ENCODE measurements at regions of chr1 and their contacts with region 1.

Region 1: GRCh38 chr1:46179138-46180081 is 3.1 kb upstream of the P3R3URF start:
- DNase-seq: peak; percentile 92
- H3K4me3 ChIP-seq: peak overlapping the region in 1 of 2 experiments; percentile 50; a peak in 1 of 4 replicates
- H3K27ac ChIP-seq: no peak overlapping the region
- H3K4me1 ChIP-seq: peaks cover 23 to 26% of the 10 kb centered on the region in 2 experiments; a peak in 3 of 4 replicates
- H3K27me3 ChIP-seq: no peaks in the 10 kb centered on the region
- CTCF ChIP-seq: peak; percentile 94
- EP300 ChIP-seq: no peak
- RAD21 ChIP-seq: peak; percentile 98

Region 2: DNA sequence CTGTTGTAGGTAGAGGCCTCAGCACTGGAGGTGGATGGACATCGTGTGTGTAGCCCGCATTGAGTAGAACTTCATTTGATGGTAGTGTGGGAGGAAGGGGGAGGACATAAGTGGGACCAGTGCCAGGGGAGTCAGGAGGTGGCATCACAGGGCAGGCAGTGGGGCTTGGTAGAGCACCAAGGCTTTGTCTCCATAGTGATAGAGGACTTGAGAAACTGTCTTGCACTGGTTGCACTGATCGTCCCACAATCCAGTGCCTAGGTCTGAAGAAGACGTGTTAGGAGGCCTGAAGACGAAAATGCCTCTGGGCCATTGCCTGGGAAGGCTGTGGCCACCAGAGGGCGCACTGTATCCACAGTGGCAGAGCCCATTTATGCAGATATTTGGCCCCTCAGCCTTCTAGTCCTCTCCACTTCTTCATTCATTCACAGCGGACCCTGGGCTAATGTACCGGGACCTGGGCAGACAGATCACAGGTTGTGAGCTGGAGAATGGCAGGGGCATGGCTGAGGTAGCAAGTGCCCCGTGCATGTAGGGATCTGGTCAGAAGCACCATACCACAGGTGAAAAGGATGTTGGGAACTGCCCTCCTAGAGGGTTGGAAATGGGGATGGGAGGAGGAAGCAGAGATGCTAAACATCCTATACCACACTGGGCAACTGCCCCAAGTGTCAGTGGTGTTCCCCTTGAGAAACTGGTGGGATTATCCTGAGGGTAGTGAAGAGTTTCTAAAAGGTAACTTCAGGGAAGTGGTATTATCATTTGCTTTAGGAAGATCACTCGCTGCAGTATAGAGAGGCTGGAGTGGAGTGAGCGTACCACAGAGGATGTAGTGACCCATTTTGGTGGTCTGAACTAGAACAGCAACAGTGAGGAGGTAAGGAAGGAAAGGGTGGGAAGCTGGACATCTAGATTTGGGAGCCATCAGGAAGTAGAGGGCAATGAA is 142.2 kb before region 1 on chr1:
- CTCF ChIA-PET with region 1: interaction called, 57 read pairs
- POLR2A ChIA-PET with region 1: no interaction called
- DNase-seq: peak; percentile 82
- H3K4me3 ChIP-seq: peak overlapping the region in 1 of 2 experiments; percentile 40; a peak in 1 of 4 replicates
- H3K27ac ChIP-seq: no peak overlapping the region; a peak in 1 of 4 replicates
- H3K4me1 ChIP-seq: peaks cover 0 to 29% of the 10 kb centered on the region in 2 experiments; a peak in 2 of 4 replicates
- H3K27me3 ChIP-seq: no peaks in the 10 kb centered on the region
- CTCF ChIP-seq: peak; percentile 97
- EP300 ChIP-seq: no peak
- RAD21 ChIP-seq: peak; percentile 90

Region 3: DNA sequence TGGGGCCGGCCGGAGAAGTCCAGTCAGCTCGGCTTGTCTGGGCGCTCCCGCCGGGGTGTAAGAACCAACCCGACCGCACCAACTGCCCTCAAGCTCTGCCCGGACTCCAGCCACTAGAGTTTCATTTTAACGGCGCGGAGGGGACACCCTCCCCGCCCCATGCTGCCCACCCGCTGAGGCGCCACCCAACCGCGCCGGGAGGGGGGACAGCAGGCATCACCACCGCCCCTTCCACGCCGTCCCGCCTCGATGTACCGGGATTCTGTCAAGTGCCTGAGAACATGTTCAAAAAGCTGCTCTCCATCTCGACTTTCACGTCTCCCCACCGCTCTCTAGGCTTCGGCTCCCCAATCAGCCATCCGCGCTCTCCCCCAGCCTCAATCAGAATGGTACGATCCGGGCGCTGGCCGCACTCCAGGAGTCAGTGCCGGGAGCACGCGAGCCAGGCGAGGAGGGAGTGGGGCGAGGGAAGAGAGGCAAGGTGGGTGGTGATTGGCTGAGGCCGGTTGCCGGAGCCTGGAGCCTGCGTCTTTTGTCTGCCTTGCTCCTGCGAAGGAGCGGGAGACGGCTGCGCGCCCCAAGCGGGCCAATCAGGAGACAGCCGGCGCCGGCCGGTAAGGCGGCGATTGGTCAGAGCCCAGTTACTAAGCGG is 46.8 kb before region 1 on chr1 and contains the start of gene PIK3R3:
- CTCF ChIA-PET with region 1: interaction called, 10 read pairs
- POLR2A ChIA-PET with region 1: no interaction called
- DNase-seq: peak; percentile 94
- H3K4me3 ChIP-seq: peak within 1 kb of the TSS; percentile 80 to 99
- H3K27ac ChIP-seq: peak within 1 kb of the TSS; percentile 98 to 100
- H3K4me1 ChIP-seq: peaks cover 13 to 22% of the 10 kb centered on the region in 2 experiments; a peak in 2 of 4 replicates
- H3K27me3 ChIP-seq: no peaks in the 10 kb centered on the region
- CTCF ChIP-seq: no peak
- EP300 ChIP-seq: peak; percentile 21 to 35; a peak in 2 of 4 replicates
- RAD21 ChIP-seq: no peak
- polyA plus RNA-seq, gene PIK3R3: 4.0 and 6.2 TPM in 2 replicates

Region 4: DNA sequence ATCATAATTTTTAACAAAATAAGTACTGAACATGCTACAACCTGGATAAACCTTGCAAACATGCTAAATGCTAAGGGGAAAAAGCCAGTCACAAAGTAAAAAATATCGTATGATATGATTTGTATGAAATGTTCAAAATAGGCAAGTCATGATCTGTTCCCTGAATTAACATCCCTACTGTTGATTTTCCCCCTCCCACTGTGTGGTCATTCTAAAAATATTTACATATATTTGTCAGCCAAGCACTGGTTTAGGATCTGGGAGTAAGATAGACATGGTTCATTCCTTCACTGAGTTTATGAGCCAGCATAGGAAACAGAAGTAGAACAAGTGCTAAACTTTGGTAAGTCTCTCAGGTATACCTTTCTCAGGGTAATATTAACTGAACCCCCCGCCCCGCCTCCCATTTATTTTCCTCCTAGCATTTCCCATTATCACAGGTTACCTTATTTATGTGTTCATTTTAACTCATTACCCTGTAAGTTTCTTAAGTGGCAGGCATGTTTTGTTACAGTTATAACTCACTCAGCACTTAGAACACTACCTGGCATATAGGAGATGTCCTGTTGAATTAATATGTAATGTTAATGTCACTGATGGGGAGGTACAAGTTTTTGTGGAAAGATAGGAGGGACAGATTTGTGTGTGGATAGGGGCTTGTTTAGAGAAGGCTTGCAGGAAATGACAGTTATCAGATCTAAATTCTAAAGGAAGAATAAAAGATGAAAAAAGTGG is 136.4 kb after region 1 on chr1:
- CTCF ChIA-PET with region 1: no interaction called
- POLR2A ChIA-PET with region 1: no interaction called
- DNase-seq: no peak
- H3K4me3 ChIP-seq: no peak overlapping the region
- H3K27ac ChIP-seq: peak overlapping the region in 1 of 2 experiments; percentile 68; a peak in 2 of 4 replicates
- H3K4me1 ChIP-seq: no peaks in the 10 kb centered on the region
- H3K27me3 ChIP-seq: no peaks in the 10 kb centered on the region
- CTCF ChIP-seq: no peak
- EP300 ChIP-seq: no peak
- RAD21 ChIP-seq: no peak